ENCODE measurements at regions of chr4 and their contacts with region 1.

Region 1: DNA sequence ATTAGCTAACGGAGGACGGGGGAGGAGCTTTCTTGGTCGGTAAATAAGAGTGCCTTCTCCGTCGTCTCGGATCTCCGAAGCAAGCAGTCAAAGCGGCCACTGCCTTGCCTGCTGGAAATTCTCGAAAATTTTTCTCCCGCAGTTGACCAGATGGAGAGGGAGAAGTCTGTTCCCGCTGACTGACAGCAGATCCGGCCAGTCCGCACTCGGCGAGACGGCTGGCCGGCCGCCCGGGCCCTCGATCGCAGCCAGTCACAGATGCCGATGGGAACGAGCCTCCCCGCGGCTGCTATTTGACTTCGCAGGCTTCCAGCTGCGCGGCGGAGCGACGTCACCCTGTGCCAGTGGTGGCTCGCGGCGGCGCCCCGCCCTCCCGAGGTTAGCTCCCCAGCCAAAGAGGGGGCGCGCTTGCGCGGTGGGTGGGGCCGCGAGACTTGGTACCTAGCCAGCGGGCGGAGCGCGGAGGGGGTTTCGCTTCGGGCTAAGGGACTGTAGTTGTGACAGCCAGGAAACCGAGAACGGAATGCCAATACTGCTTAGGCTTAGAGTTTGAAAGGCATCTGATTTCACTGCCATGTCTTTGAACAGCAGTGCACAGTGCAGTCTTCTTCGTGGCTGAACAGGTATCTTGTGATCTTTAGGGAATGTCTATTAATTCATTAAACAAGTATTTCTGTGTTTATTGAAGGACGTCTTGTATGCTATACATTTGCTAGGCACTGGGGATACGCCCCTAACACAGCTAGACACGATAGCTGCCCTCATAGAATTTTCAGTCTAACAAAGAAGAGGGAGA is at the start of gene PPM1K:
- DNase-seq: peak; percentile 99
- ATAC-seq: peak; percentile 91
- H3K4me3 Mint-ChIP-seq: peak within 1 kb of the TSS; percentile 99
- H3K27ac Mint-ChIP-seq: peak within 1 kb of the TSS; percentile 97
- H3K4me1 Mint-ChIP-seq: peaks cover 43% of the 10 kb centered on the region
- H3K27me3 Mint-ChIP-seq: no peaks in the 10 kb centered on the region
- total RNA-seq, gene PPM1K: 58.4 to 59.3 TPM

Region 2: GRCh38 chr4:88217920-88218319 is 66.7 kb before region 1 on chr4:
- CTCF ChIA-PET with region 1: interaction called, 15 read pairs
- POLR2A ChIA-PET with region 1: no interaction called
- DNase-seq: no peak
- ATAC-seq: no peak
- H3K4me3 Mint-ChIP-seq: no peak overlapping the region
- H3K27ac Mint-ChIP-seq: no peak overlapping the region
- H3K4me1 Mint-ChIP-seq: peaks cover 6% of the 10 kb centered on the region
- H3K27me3 Mint-ChIP-seq: peaks cover 6% of the 10 kb centered on the region

Region 3: DNA sequence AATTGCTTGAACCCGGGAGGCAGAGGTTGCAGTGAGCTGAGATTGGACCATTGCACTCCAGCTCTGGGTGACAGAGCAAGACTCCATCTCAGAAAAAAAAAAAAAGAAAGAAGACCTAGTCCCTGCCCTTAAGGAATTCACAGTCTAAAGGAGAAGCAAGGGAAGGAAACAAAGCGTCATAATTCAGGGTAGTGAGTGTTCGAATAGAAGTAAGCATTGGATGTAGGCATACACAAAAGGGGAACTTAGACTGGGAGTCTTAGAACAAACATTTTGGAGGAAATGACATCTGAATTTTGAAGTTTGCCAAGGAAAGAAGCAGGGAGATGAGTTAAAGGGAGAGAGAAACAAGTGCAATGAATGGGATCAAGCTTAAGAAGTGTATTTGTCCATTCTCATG is 32.7 kb before region 1 on chr4:
- CTCF ChIA-PET with region 1: no interaction called
- POLR2A ChIA-PET with region 1: no interaction called
- DNase-seq: no peak
- ATAC-seq: no peak
- H3K4me3 Mint-ChIP-seq: no peak overlapping the region
- H3K27ac Mint-ChIP-seq: no peak overlapping the region
- H3K4me1 Mint-ChIP-seq: no peaks in the 10 kb centered on the region
- H3K27me3 Mint-ChIP-seq: peaks cover 6% of the 10 kb centered on the region

Region 4: GRCh38 chr4:88297725-88298454 is 13.3 kb after region 1 on chr4:
- CTCF ChIA-PET with region 1: interaction called, 10 read pairs
- POLR2A ChIA-PET with region 1: interaction called, 8 read pairs
- DNase-seq: no peak
- ATAC-seq: no peak
- H3K4me3 Mint-ChIP-seq: no peak overlapping the region
- H3K27ac Mint-ChIP-seq: no peak overlapping the region
- H3K4me1 Mint-ChIP-seq: no peaks in the 10 kb centered on the region
- H3K27me3 Mint-ChIP-seq: no peaks in the 10 kb centered on the region

Region 5: GRCh38 chr4:88308587-88308986 is 23.9 kb after region 1 on chr4:
- CTCF ChIA-PET with region 1: no interaction called
- POLR2A ChIA-PET with region 1: no interaction called
- DNase-seq: no peak
- ATAC-seq: no peak
- H3K4me3 Mint-ChIP-seq: no peak overlapping the region
- H3K27ac Mint-ChIP-seq: no peak overlapping the region
- H3K4me1 Mint-ChIP-seq: no peaks in the 10 kb centered on the region
- H3K27me3 Mint-ChIP-seq: peaks cover 30% of the 10 kb centered on the region

Region 6: DNA sequence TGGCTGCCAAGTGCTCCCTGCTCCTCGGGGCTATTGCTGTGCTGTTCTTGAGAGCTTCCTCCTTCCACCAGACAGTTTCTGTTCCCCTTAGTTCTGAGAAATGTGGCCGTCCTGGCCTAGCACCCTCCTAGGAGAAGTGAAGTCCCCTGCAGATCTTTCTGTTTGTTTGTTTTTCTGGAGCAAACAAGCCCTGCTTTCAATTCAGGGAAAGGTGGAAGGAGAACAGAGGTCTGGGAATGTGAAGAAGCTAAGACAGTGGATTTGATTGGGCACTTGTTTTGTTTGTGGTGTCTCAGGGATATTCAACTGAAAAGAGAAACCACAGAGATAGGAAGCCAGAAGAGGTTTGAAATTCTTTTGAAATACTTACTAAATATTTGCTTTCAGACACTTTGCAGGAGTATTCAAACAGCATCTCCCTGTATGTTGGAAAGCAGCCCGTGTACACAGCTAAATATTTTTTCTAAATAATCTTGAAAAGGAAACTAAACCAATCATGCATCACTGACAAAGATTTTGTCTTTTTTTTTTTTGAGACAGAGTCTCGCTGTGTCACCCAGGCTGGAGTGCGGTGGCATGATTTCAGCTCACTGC is 36.2 kb after region 1 on chr4:
- CTCF ChIA-PET with region 1: interaction called, 16 read pairs
- POLR2A ChIA-PET with region 1: interaction called, 39 read pairs
- DNase-seq: peak; percentile 60
- ATAC-seq: peak; percentile 97
- H3K4me3 Mint-ChIP-seq: peak overlapping the region; percentile 77
- H3K27ac Mint-ChIP-seq: peak overlapping the region; percentile 99
- H3K4me1 Mint-ChIP-seq: peaks cover 29% of the 10 kb centered on the region
- H3K27me3 Mint-ChIP-seq: peaks cover 1% of the 10 kb centered on the region

Region 7: DNA sequence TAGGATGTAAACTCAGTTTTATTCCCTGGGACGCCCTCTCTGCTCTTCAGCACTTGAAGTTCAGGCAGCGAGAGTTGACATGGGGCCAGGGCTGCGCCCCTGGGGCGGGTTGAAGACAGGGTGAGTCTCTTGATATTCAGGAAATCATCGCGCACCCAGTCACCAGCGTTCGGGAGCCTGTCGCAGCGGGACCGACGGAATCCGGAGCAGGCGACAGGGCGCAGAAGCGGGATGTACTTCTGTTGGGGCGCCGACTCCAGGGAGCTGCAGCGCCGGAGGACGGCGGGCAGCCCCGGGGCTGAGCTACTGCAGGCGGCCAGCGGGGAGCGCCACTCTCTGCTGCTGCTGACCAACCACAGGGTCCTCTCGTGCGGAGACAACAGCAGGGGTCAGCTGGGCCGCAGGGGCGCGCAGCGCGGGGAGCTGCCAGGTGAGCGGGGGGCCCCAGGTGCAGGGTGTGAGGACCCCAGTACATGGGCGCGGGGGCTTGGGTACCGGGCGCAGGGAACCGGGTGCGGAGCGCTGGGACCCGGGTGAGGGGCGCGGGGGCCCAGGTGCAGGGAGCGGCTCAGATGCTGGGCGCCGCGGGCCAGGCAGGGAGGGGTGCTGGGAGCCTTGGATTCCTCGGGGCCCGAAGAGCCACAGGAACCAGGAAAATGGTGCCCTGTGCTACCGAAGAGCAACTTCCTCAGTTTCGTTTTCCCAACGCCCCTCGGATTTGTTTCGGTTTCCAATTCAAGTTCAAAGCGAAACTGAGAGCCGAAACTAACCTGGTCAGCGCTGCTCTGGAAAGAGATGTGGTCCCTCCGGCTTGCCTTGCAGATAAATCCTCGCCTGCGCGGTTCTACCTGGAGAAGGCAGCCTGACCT is 94.3 kb after region 1 on chr4 and contains the start of gene HERC6:
- CTCF ChIA-PET with region 1: interaction called, 7 read pairs
- POLR2A ChIA-PET with region 1: interaction called, 37 read pairs
- DNase-seq: peak; percentile 94
- ATAC-seq: peak; percentile 62
- H3K4me3 Mint-ChIP-seq: peak within 1 kb of the TSS; percentile 87
- H3K27ac Mint-ChIP-seq: peak within 1 kb of the TSS; percentile 93
- H3K4me1 Mint-ChIP-seq: peaks cover 58% of the 10 kb centered on the region
- H3K27me3 Mint-ChIP-seq: no peaks in the 10 kb centered on the region
- total RNA-seq, gene HERC6: 25.5 to 26.9 TPM